Activated T-helper 1 cell treated with anti-CD3 and anti-CD28 coated beads, Interleukin-12 subunit alpha, Interleukin-12 subunit beta, Interleukin-2, Interleukin-4 antibody, amounts not matched to agents 30 ng/mL and 10 ng/mL and 1 ng/mL, durations not matched to agents 14 hours and 24 hours and 36 hours (primary cell): ENCODE measurements at regions of chr6 and their contacts with region 1.

Region 1: GRCh38 chr6:136751522-136751956 is 40.7 kb downstream of the MAP3K5 start:
- DNase-seq: peak; percentile 45
- H3K4me3 Mint-ChIP-seq: peak overlapping the region; percentile 75
- H3K27ac Mint-ChIP-seq: peak overlapping the region; percentile 87
- H3K4me1 Mint-ChIP-seq: peaks cover 92% of the 10 kb centered on the region
- H3K27me3 Mint-ChIP-seq: no peaks in the 10 kb centered on the region

Region 2: DNA sequence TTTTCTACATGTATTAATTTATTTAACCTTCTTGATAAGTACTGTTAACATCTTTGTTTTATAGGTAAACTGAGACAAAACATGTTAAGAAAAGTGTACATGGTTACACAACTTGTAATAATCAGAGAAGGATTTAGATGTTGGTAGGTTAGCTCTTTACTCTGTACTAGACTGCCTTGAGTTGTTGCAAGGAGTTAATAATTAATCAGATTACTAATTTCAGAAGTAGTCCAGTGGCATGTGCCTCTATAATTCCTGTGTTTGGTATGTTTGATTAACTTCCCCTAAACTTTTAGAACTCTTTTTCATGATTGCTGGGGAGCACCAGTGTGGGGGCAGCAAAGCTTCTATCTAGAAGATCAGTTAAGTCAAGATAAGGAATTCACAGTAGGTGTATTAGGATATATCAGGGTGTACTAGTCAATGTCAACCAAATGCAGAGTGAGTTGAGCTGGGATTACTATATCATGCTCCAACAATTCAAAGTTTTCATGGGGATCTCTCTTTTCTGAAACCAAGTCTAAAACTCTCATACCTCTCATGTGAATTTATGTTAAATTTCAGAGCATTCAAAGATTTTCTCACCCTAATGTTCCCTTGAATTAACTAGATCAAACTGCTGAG is 1124.3 kb before region 1 on chr6:
- intact Hi-C with region 1: no loop called
- DNase-seq: no peak
- H3K4me3 Mint-ChIP-seq: no peak overlapping the region
- H3K27ac Mint-ChIP-seq: peak overlapping the region; percentile 68
- H3K4me1 Mint-ChIP-seq: peaks cover 80% of the 10 kb centered on the region
- H3K27me3 Mint-ChIP-seq: no peaks in the 10 kb centered on the region

Region 3: DNA sequence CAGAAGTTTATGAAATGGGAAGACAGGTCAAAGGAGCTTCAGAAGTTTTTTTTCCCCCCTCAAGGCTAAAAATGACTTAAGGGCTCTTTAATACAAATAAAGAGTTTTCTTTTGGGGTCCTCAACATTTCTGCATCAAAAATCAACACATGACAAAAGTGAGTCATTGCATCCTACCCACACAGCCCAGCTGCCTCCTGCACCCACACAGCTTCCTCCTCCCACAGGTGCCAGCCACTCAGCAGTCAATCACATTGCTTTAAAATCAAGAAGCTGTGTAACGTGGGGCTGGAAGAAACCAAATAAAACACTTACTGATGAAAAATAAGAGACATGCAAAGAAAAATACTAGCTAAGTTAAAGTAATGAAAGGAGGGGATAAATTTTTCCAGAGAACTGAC is 27.8 kb before region 1 on chr6:
- intact Hi-C with region 1: loop called (anchors 2 kb)
- DNase-seq: peak; percentile 6
- H3K4me3 Mint-ChIP-seq: peak overlapping the region; percentile 6
- H3K27ac Mint-ChIP-seq: peak overlapping the region; percentile 14
- H3K4me1 Mint-ChIP-seq: peaks cover 64% of the 10 kb centered on the region
- H3K27me3 Mint-ChIP-seq: no peaks in the 10 kb centered on the region

Region 4: DNA sequence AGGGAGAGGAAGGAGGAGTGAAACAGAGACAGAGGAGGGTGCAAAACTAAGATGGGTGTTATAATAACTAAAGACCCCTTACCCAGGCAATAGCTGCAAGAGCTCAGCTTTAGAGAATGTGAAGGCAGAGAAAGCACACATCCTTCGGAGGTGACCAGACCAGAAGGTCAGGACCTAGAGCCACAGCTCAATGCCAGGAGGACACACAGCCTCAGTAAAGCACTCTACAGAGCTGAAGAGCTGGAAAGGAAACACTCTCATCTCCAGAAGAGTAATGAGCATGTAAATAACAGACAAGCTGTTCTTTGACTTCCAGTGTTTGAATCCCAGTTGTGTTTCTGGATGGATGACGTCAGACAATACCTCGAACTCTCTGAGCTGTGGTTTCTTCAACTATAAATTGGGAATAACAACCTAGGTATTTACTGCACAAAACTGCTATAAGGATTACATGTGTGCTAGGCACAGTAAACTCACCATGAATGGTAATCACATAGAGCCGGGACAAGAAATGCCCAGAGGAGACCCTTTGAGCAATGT is 22.5 kb before region 1 on chr6:
- intact Hi-C with region 1: loop called (anchors 2 kb)
- DNase-seq: no peak
- H3K4me3 Mint-ChIP-seq: no peak overlapping the region
- H3K27ac Mint-ChIP-seq: no peak overlapping the region
- H3K4me1 Mint-ChIP-seq: peaks cover 83% of the 10 kb centered on the region
- H3K27me3 Mint-ChIP-seq: no peaks in the 10 kb centered on the region

Region 5: DNA sequence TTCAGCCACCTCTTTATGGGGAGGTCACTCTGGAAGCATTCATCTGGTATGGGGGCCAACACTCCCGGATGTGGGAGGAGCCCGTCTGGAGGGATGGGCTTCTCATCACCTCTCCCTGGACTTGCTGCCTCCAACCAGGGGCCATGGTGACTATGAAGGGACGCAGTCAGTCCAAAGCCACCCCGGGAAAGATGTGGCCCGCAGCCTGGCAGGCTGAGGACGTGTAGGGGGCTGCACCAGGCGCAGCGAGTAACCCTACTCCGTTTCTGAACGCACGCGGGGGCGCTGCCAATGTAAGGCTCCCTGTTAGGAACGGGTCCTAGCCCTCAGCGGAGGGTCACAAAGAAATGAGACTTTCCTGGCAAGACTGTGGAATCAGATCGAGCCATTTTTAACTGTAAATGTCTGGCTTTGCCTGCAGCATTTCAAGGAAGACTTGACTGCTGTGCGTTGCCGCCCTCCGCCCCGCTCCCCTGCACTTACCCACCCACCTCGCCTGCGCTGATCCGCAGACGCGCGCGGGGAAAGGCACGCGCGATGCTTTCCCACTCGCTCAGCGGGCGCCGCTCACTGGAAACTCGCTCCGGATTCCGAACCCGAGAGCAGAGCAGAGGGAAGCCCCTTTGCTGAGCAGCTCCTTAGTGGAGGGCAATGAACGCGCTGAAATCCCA is 238.2 kb after region 1 on chr6:
- intact Hi-C with region 1: no loop called
- DNase-seq: no peak
- H3K4me3 Mint-ChIP-seq: no peak overlapping the region
- H3K27ac Mint-ChIP-seq: no peak overlapping the region
- H3K4me1 Mint-ChIP-seq: no peaks in the 10 kb centered on the region
- H3K27me3 Mint-ChIP-seq: peaks cover 68% of the 10 kb centered on the region